Calu3 (cell line): ENCODE measurements at regions of chr17 and their contacts with region 1.

Region 1: GRCh38 chr17:39636927-39637736 is at the start of gene STARD3:
- DNase-seq: no peak
- H3K4me3 Mint-ChIP-seq: peak within 1 kb of the TSS; percentile 71
- H3K27ac Mint-ChIP-seq: peak within 1 kb of the TSS; percentile 28
- H3K4me1 Mint-ChIP-seq: peaks cover 61% of the 10 kb centered on the region
- H3K27me3 Mint-ChIP-seq: peaks cover 5% of the 10 kb centered on the region
- CTCF ChIP-seq: no peak
- total RNA-seq, gene STARD3: 2,579 and 2,697 TPM in 2 replicates

Region 2: DNA sequence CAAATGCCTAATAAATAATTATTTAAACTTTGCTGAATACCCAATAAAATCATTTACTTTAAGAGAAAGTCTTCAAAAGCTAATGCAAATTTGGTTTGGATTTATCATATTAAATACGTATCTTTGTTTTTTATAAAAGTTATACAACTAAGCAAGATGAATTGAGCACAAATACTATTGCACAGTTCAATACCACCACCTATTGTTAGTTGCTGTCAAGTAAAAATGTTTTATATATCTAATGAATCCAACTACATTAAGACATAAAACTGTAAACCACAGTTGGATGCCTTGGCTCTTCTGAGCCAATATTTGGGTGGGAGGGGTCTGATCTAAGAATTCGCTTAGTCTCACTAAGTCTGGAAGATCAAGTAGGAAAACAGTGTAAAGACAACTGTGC is 243.4 kb before region 1 on chr17:
- CTCF ChIA-PET with region 1: no interaction called
- intact Hi-C with region 1: no loop called
- DNase-seq: no peak
- H3K4me3 Mint-ChIP-seq: no peak overlapping the region
- H3K27ac Mint-ChIP-seq: no peak overlapping the region
- H3K4me1 Mint-ChIP-seq: no peaks in the 10 kb centered on the region
- H3K27me3 Mint-ChIP-seq: no peaks in the 10 kb centered on the region
- CTCF ChIP-seq: no peak

Region 3: DNA sequence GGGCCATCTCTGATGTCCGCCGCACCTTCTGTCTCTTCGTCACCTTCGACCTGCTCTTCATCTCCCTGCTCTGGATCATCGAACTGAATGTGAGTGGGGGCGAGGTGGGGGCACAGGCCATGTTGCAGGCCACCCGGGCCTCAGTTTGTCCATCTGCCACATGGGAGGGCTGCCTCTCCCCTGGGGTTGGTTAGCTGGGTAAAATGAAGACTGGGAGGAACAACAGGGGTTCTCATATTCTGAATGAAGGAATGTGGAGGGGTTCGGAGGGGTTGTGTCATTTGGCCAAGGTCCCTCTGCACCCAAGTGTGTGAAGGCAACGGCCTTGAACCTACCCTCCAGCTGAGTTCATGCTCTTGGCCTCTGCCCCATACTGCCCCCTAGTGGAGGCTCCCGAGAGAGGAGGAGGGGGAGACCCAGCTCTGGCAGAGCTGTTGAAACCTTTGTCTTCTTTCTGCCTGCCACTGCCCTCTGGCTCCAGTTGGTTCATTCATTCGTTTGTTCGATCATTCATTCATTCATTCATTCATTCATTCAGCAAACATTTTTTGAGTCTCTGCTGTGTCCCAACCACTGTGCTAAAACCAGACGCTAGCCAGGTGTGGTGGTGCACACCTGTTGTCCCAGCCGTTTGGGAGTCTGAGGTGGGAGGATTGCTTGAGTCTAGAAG is 16.7 kb after region 1 on chr17:
- CTCF ChIA-PET with region 1: interaction called, 42,089 read pairs
- intact Hi-C with region 1: loop called (anchors 1 kb)
- DNase-seq: peak; percentile 100
- H3K4me3 Mint-ChIP-seq: no peak overlapping the region
- H3K27ac Mint-ChIP-seq: no peak overlapping the region
- H3K4me1 Mint-ChIP-seq: peaks cover 23% of the 10 kb centered on the region
- H3K27me3 Mint-ChIP-seq: no peaks in the 10 kb centered on the region
- CTCF ChIP-seq: no peak

Region 4: DNA sequence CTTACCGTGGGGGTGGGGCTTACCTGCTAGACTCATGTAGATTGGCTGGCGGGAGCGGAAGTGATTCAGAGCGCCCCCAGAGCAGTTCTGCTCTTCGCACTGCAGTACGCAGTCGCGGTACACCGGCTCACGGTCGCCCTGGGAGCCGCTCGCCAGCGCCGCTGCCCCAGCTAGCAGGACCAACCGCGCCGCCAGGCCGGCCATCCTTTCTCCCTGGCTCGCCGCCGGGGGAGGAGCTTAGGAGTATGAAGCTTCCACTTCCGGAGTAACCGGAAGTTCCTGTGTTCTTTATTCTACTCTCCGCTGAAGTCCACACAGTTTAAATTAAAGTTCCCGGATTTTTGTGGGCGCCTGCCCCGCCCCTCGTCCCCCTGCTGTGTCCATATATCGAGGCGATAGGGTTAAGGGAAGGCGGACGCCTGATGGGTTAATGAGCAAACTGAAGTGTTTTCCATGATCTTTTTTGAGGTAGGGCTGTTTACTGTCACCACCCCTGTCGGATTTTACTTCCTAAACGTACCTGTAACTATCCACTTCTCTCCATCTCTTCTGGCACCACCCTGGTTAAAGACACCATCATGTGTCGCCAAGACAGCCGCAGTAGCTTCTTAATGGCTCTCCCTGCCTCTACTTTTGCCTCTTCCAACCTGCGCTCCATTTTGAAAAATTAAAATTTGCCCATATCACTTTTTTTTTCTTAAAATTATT is 50.8 kb after region 1 on chr17 and contains the start of gene PGAP3:
- CTCF ChIA-PET with region 1: interaction called, 42,089 read pairs
- intact Hi-C with region 1: loop called (anchors 1 kb)
- DNase-seq: peak; percentile 100
- H3K4me3 Mint-ChIP-seq: peak within 1 kb of the TSS; percentile 64
- H3K27ac Mint-ChIP-seq: peak within 1 kb of the TSS; percentile 63
- H3K4me1 Mint-ChIP-seq: peaks cover 27% of the 10 kb centered on the region
- H3K27me3 Mint-ChIP-seq: no peaks in the 10 kb centered on the region
- CTCF ChIP-seq: no peak
- total RNA-seq, gene PGAP3: 1,186 and 1,276 TPM in 2 replicates

Region 5: DNA sequence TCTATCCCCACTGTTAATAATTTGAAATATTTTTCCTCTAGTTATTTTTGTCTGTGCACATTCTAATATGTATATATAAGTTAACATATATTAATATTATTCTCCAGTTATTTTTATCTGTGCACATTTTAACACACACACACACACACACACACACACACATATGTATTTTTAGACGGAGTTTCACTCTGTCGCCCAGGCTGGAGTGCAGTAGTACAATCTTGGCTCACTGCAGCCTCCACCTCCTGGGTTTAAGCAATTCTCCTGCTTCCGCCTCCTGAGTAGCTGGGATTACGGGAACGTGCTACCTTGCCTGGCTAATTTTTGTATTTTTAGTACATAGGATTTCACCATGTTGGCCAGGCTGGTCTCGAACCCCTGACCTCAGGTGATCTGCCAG is 80.5 kb after region 1 on chr17:
- CTCF ChIA-PET with region 1: interaction called, 42,089 read pairs
- intact Hi-C with region 1: loop called (anchors 1 kb)
- DNase-seq: no peak
- H3K4me3 Mint-ChIP-seq: no peak overlapping the region
- H3K27ac Mint-ChIP-seq: peak overlapping the region; percentile 2
- H3K4me1 Mint-ChIP-seq: peaks cover 21% of the 10 kb centered on the region
- H3K27me3 Mint-ChIP-seq: no peaks in the 10 kb centered on the region
- CTCF ChIP-seq: no peak

Region 6: GRCh38 chr17:39927101-39927928 is 290.2 kb after region 1 on chr17 and contains the starts of genes LRRC3C and ORMDL3:
- CTCF ChIA-PET with region 1: interaction called, 4,313 read pairs
- intact Hi-C with region 1: loop called (anchors 1 kb)
- DNase-seq: no peak
- H3K4me3 Mint-ChIP-seq: peak within 1 kb of the TSS; percentile 74
- H3K27ac Mint-ChIP-seq: peak within 1 kb of the TSS; percentile 66
- H3K4me1 Mint-ChIP-seq: peaks cover 60% of the 10 kb centered on the region
- H3K27me3 Mint-ChIP-seq: no peaks in the 10 kb centered on the region
- CTCF ChIP-seq: no peak
- total RNA-seq, gene LRRC3C: not detected in 2 replicates
- total RNA-seq, gene ORMDL3: 1,738 and 1,968 TPM in 2 replicates

Region 7: DNA sequence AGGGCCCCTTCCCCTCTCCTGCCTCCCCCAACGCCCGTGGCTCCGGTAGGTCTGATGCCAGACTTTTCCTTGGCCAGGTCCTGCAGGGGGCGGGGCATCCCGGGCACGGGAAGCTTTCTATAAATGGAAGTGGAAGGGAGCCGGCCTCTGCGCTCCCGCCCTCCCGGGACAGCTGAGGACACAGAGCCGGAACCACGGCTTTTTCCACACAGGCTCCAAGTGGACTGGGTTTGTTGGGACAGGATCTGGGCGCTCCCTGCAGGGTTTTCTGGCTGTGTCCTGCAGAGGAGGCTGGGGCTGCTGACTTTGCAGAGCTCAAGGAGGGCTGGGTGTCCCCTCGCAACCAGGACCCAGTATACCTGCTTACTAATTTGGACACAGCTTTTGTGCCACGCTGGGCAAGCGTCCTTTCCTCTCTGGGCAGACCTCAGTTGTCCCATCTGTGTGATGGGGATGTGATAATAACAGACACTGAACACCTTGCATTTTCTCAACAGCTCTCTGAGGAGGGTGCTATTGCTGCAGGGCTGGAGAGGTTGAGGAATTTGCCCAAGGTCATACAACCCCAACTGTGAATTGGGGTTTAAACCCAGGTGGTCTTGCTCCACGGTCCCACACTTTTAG is 862.5 kb after region 1 on chr17:
- CTCF ChIA-PET with region 1: interaction called, 3 read pairs
- intact Hi-C with region 1: loop called (anchors 10 kb)
- DNase-seq: peak; percentile 100
- H3K4me3 Mint-ChIP-seq: peak overlapping the region; percentile 33
- H3K27ac Mint-ChIP-seq: no peak overlapping the region
- H3K4me1 Mint-ChIP-seq: peaks cover 20% of the 10 kb centered on the region
- H3K27me3 Mint-ChIP-seq: peaks cover 82% of the 10 kb centered on the region
- CTCF ChIP-seq: no peak